Prostate gland (tissue), 2 donors: ENCODE measurements at regions of chr7 and their contacts with region 1.

Region 1: DNA sequence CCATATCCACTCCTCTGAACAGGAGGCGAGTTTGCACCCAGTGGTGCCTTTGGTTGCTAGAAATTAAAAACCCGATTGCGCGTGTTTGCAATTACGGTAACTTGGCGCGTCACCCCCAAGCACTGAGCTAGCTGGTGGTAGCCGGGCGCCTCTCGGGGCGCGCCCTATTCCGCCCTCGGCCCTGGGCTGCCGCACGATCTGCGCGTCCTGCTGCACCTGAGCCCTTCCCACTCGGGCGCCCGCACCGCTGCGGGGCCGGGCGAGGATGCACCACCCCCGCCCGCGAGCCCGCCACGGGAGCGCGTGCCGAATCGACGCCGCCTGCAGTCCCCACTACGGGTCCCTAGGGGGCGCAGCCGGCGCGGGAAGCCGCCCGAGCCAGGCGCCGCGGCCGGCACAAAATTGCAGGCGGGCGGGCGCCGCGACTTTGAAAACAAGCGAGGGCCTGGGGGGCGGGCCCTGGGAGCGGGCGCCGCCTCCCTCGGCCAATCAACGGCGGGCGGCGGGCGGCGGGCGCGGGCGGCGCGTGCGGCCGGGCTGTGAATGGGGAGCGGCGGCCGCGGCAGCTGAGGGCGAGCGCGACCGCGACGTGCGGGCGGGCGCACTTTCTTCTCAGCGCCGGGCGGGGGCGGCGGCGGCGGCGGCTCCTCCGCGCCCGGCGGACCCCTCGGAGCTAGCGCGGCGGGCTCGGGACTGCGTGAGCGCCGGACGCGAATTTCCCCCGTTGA is at the start of gene SDK1:
- DNase-seq: peak; percentile 89
- H3K4me3 ChIP-seq: peak within 1 kb of the TSS; percentile 48 to 56
- H3K27ac ChIP-seq: peak within 1 kb of the TSS in 1 of 2 donors; percentile 6
- H3K4me1 ChIP-seq: no peaks in the 10 kb centered on the region
- H3K27me3 ChIP-seq: no peaks in the 10 kb centered on the region
- CTCF ChIP-seq: peak; percentile 91 to 99 (median 95)
- POLR2A ChIP-seq: peak; percentile 14
- total RNA-seq, gene SDK1: 4.8 to 13.2 TPM

Region 2: GRCh38 chr7:3370068-3370830 is 69.4 kb after region 1 on chr7:
- intact Hi-C with region 1: loop called (anchors 5 kb)
- DNase-seq: no peak
- H3K4me3 ChIP-seq: no peak overlapping the region
- H3K27ac ChIP-seq: peak overlapping the region in 1 of 2 donors; percentile 39
- H3K4me1 ChIP-seq: no peaks in the 10 kb centered on the region
- H3K27me3 ChIP-seq: no peaks in the 10 kb centered on the region
- CTCF ChIP-seq: peak in 1 of 4 experiments; percentile 17
- POLR2A ChIP-seq: no peak

Region 3: GRCh38 chr7:3493499-3493898 is 192.7 kb after region 1 on chr7:
- intact Hi-C with region 1: loop called (anchors 10 kb)
- DNase-seq: no peak
- H3K4me3 ChIP-seq: no peak overlapping the region
- H3K27ac ChIP-seq: no peak overlapping the region
- H3K4me1 ChIP-seq: no peaks in the 10 kb centered on the region
- H3K27me3 ChIP-seq: no peaks in the 10 kb centered on the region
- CTCF ChIP-seq: no peak
- POLR2A ChIP-seq: no peak

Region 4: DNA sequence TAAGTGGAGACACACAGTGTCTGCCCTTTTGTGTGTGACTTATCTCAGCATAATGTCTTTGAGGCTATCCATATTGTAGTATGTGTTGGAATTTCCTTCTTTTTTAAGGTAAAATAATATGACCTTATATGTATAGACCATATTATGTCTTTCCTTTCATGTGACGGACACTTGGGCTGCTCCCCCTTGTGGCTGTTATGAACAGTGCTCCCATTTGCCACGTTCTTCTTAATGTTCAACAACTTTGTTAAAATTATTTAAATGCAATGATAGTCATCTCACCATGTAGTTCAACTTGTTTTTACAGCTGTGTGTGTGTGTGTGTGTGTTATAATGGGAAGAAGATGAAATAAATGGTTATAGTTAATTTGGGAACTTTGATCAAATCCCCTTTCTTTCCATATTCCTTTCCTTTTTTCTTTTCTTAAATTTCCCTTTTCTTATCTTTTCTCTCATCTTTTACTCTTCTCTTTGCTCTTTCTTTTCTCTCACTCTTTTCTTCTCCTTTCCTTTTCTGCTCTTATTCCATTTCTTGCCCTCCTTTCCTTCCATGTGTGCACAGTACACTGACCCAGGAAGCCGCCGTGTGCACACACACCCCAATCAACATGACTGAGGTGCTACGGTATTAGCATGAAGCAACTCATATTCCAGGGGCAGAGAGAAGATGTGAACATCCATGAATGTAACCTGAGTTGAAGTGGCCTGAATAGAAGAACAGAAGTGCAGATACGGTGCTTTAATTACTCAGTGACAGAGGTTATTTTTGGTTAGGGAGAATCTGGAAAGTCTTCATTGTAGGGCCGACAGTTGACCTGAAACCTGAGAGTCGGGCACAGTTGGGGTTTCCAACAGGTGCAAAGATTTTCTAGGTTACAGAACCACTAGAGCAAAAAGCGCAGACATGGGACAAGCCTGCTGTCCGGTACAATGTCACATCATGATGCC is 596.9 kb after region 1 on chr7:
- intact Hi-C with region 1: loop called (anchors 5 kb)
- DNase-seq: peak; percentile 36
- H3K4me3 ChIP-seq: no peak overlapping the region
- H3K27ac ChIP-seq: no peak overlapping the region
- H3K4me1 ChIP-seq: no peaks in the 10 kb centered on the region
- H3K27me3 ChIP-seq: no peaks in the 10 kb centered on the region
- CTCF ChIP-seq: peak; percentile 71 to 80 (median 76)
- POLR2A ChIP-seq: no peak

Region 5: DNA sequence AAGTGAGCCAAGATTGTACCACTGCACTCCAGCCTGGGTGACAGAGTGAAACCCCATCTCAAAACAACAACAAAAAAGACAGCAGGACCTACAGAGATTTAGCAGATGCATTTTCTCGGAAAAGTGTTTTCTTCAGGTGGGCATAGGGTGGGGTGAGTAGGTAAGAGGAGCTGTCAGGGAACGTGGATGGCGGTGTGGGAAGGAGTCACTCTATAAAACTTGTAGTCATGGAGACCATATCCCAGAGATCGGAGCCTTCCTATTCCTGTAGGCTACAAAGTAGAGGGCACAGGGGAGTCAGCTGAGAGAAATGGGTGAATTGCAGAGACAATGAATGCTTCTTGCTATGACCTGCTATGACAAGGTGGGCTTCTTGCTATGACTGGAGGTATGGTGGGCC is 1098.3 kb after region 1 on chr7:
- intact Hi-C with region 1: no loop called
- DNase-seq: no peak
- H3K4me3 ChIP-seq: no peak overlapping the region
- H3K27ac ChIP-seq: no peak overlapping the region
- H3K4me1 ChIP-seq: no peaks in the 10 kb centered on the region
- H3K27me3 ChIP-seq: no peaks in the 10 kb centered on the region
- CTCF ChIP-seq: no peak
- POLR2A ChIP-seq: no peak